Body of pancreas (tissue), 4 donors: ENCODE measurements at regions of chr14 and their contacts with region 1.

Region 1: DNA sequence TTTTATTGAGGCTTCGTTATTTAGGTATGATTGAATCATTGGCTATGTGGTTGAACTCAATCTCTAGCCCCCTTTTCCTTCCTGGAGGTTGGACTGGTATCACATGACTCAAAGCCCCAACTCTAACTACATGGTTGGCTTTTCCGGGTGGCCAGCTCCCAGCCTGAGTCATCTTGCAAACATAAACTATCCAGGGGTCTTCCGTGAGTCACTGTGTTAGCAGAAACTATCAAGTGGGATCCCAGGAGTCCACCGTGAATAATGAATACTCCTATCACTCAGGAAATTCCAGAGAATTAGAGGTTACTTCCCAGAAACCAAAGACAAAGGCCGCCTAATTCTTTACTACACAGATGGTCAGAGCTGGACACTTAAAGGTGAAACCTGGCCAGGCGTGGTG is 19.7 kb upstream of the PLEKHD1 start:
- DNase-seq: no peak
- ATAC-seq: no peak
- H3K4me3 ChIP-seq: no peak overlapping the region
- H3K27ac ChIP-seq: no peak overlapping the region
- H3K4me1 ChIP-seq: no peaks in the 10 kb centered on the region
- H3K27me3 ChIP-seq: no peaks in the 10 kb centered on the region
- CTCF ChIP-seq: no peak
- POLR2A ChIP-seq: no peak

Region 2: GRCh38 chr14:69252851-69253250 is 212.0 kb before region 1 on chr14:
- intact Hi-C with region 1: loop called (anchors 5 kb)
- DNase-seq: no peak
- ATAC-seq: no peak
- H3K4me3 ChIP-seq: no peak overlapping the region
- H3K27ac ChIP-seq: no peak overlapping the region
- H3K4me1 ChIP-seq: no peaks in the 10 kb centered on the region
- H3K27me3 ChIP-seq: no peaks in the 10 kb centered on the region
- CTCF ChIP-seq: no peak
- POLR2A ChIP-seq: no peak

Region 3: GRCh38 chr14:69387311-69387710 is 77.5 kb before region 1 on chr14:
- intact Hi-C with region 1: no loop called
- DNase-seq: no peak
- ATAC-seq: no peak
- H3K4me3 ChIP-seq: no peak overlapping the region
- H3K27ac ChIP-seq: no peak overlapping the region
- H3K4me1 ChIP-seq: peaks cover 8% of the 10 kb centered on the region
- H3K27me3 ChIP-seq: no peaks in the 10 kb centered on the region
- CTCF ChIP-seq: no peak
- POLR2A ChIP-seq: no peak

Region 4: DNA sequence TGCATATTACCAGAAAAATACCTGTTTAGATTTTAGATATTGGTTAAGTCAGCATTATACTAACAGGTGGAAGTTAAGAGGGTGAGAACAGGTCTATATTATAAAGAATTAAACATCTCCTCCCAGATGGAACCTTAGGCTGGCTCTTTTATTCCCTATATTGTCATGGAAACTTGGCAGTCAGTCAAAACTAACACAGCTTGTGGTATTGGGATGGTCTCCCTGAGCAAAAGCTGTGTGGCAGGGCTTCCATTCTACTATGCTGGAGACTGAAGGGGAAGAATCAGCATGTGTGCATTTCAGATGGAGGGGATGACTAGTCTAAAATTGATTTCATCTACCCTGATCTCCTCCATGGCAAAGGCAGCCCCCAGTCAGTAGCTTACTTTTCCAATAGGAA is 481.1 kb after region 1 on chr14:
- intact Hi-C with region 1: no loop called
- DNase-seq: no peak
- ATAC-seq: no peak
- H3K4me3 ChIP-seq: no peak overlapping the region
- H3K27ac ChIP-seq: no peak overlapping the region
- H3K4me1 ChIP-seq: peaks cover 28% of the 10 kb centered on the region
- H3K27me3 ChIP-seq: no peaks in the 10 kb centered on the region
- CTCF ChIP-seq: no peak
- POLR2A ChIP-seq: no peak